ENCODE measurements at regions of chr9 and their contacts with region 1.

Region 1: GRCh38 chr9:86321373-86321772 is 32.8 kb downstream of the TUT7 start:
- DNase-seq: no peak
- ATAC-seq: no peak
- H3K4me3 Mint-ChIP-seq: no peak overlapping the region
- H3K27ac Mint-ChIP-seq: no peak overlapping the region
- H3K4me1 Mint-ChIP-seq: no peaks in the 10 kb centered on the region
- H3K27me3 Mint-ChIP-seq: no peaks in the 10 kb centered on the region
- CTCF ChIP-seq: no peak

Region 2: GRCh38 chr9:86298873-86299272 is 22.5 kb before region 1 on chr9:
- CTCF ChIA-PET with region 1: interaction called, 3 read pairs
- POLR2A ChIA-PET with region 1: interaction called, 10 read pairs
- intact Hi-C with region 1: no loop called
- DNase-seq: no peak
- ATAC-seq: no peak
- H3K4me3 Mint-ChIP-seq: no peak overlapping the region
- H3K27ac Mint-ChIP-seq: no peak overlapping the region
- H3K4me1 Mint-ChIP-seq: no peaks in the 10 kb centered on the region
- H3K27me3 Mint-ChIP-seq: no peaks in the 10 kb centered on the region
- CTCF ChIP-seq: no peak

Region 3: GRCh38 chr9:86337469-86338108 is 16.2 kb after region 1 on chr9:
- CTCF ChIA-PET with region 1: no interaction called
- POLR2A ChIA-PET with region 1: no interaction called
- intact Hi-C with region 1: loop called (anchors 2 kb)
- DNase-seq: no peak
- ATAC-seq: peak; percentile 25
- H3K4me3 Mint-ChIP-seq: peak overlapping the region; percentile 49
- H3K27ac Mint-ChIP-seq: peak overlapping the region; percentile 51
- H3K4me1 Mint-ChIP-seq: peaks cover 53% of the 10 kb centered on the region
- H3K27me3 Mint-ChIP-seq: no peaks in the 10 kb centered on the region
- CTCF ChIP-seq: no peak

Region 4: DNA sequence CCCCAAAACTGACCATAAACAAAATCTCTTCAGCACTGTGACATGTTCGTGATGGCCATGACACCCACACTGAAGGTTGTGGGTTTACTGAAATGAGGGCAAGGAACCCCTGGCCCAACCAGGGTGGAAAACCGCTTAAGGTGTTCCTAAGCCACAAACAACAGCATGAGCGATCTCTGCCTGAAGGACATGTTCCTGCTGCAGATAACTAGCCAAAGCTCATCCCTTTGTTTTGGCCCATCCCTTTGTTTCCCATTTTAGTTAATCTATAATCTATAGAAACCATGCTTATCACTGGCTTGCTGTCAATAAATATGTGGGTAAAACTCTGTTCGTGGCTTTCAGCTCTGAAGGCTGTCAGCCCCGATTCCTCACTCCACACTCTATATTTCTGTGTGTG is 54.6 kb after region 1 on chr9:
- CTCF ChIA-PET with region 1: no interaction called
- POLR2A ChIA-PET with region 1: no interaction called
- intact Hi-C with region 1: no loop called
- DNase-seq: no peak
- ATAC-seq: no peak
- H3K4me3 Mint-ChIP-seq: no peak overlapping the region
- H3K27ac Mint-ChIP-seq: no peak overlapping the region
- H3K4me1 Mint-ChIP-seq: no peaks in the 10 kb centered on the region
- H3K27me3 Mint-ChIP-seq: peaks cover 31% of the 10 kb centered on the region
- CTCF ChIP-seq: no peak

Region 5: DNA sequence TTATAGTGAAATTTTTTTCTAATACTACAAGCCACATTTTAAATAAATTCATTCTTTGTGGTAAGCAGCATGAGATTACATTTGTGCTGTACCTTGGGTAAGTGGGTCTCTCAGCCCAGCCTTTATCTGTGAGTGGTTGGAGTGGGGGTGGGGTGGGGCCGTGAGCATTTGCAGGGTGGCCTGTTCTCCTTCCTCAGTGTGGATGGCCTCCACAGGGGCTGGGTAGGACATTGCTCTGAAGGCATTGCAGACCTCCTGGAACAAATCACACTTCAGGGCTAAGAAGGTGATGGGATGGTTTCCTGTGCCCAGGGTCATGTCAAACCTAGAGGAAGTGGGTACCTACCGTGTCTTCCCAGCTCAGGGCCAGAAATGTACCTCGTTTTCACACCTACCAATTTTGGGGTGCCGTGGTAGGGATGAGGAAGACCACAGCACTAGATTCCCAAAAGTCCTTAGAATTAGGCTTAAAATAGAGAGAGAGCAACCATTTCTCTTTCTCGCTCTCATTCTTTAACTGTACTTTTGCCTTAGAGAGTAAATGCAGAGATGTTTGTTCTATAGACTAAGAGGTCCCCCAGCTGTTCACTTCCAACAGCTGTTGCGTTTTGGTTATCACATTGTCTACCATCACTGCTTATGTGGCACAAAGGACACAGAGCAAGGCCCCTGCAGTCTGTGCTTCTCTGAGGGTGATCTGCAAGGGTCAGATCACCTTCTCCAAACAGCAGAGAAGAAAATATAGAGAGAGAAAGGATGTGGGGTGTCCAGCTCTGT is 1321.1 kb after region 1 on chr9:
- CTCF ChIA-PET with region 1: no interaction called
- POLR2A ChIA-PET with region 1: no interaction called
- intact Hi-C with region 1: no loop called
- DNase-seq: no peak
- ATAC-seq: no peak
- H3K4me3 Mint-ChIP-seq: no peak overlapping the region
- H3K27ac Mint-ChIP-seq: no peak overlapping the region
- H3K4me1 Mint-ChIP-seq: no peaks in the 10 kb centered on the region
- H3K27me3 Mint-ChIP-seq: no peaks in the 10 kb centered on the region
- CTCF ChIP-seq: no peak

Measured in activated B cell treated with CpG ODN at 0.5 μM for 24 hours (primary cell).